Colonic mucosa (tissue), 4 donors: ENCODE measurements at regions of chr14 and their contacts with region 1.

Region 1: GRCh38 chr14:103576371-103577024 is 13.7 kb downstream of the COA8 start:
- DNase-seq: peak; percentile 97
- H3K4me3 ChIP-seq: no peak overlapping the region
- H3K27ac ChIP-seq: peak overlapping the region; percentile 81
- H3K4me1 ChIP-seq: peaks cover 6% of the 10 kb centered on the region
- H3K27me3 ChIP-seq: no peaks in the 10 kb centered on the region
- CTCF ChIP-seq: no peak

Region 2: DNA sequence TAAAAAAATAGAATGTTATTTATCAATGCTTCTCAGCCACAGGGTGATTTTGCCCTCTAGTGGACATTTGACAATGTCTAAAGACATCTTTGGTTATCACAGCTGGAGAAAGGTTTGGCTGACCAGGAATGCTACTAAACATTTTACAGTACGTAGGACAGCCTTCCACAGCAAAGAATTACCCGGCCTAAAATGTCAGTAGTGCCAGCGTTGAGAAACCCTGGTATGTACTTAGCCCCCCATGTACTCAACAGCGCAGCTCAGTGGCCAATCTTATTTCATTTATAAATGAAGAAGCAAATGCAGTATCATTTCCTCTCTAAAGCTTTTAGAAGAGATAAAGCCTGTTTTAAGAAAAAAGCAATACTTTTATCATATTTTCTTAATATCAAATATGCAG is 185.4 kb before region 1 on chr14:
- intact Hi-C with region 1: no loop called
- DNase-seq: no peak
- H3K4me3 ChIP-seq: no peak overlapping the region
- H3K27ac ChIP-seq: no peak overlapping the region
- H3K4me1 ChIP-seq: peaks cover 13% of the 10 kb centered on the region
- H3K27me3 ChIP-seq: no peaks in the 10 kb centered on the region
- CTCF ChIP-seq: peak; percentile 39

Region 3: GRCh38 chr14:103628684-103629502 is 52.4 kb after region 1 on chr14 and contains the start of gene KLC1:
- intact Hi-C with region 1: loop called (anchors 5 kb)
- DNase-seq: peak; percentile 90
- H3K4me3 ChIP-seq: peak within 1 kb of the TSS; percentile 98
- H3K27ac ChIP-seq: peak within 1 kb of the TSS; percentile 95
- H3K4me1 ChIP-seq: peaks cover 7% of the 10 kb centered on the region
- H3K27me3 ChIP-seq: no peaks in the 10 kb centered on the region
- CTCF ChIP-seq: no peak
- total RNA-seq, gene KLC1: 78.1 to 112 TPM

Region 4: DNA sequence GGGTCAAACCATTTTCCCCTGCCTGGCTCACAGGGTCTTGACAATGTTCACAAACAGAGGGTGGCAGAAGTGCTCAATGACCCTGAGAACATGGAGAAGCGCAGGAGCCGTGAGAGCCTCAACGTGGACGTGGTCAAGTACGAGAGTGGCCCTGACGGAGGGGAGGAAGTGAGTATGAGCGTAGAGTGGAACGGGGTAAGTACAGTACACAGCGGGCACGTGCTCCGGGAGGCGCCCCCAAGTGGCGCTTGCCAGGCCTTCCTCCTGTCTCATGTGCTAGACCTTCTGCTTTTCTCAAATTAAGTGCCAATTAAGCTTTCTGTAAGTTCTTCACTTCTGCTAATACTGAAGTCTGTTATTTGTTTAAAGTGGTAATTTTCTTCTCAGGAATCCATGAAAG is 102.9 kb after region 1 on chr14:
- intact Hi-C with region 1: loop called (anchors 5 kb)
- DNase-seq: peak; percentile 38
- H3K4me3 ChIP-seq: no peak overlapping the region
- H3K27ac ChIP-seq: no peak overlapping the region
- H3K4me1 ChIP-seq: no peaks in the 10 kb centered on the region
- H3K27me3 ChIP-seq: no peaks in the 10 kb centered on the region
- CTCF ChIP-seq: peak; percentile 17